ENCODE measurements at regions of chr11 and their contacts with region 1.

Region 1: DNA sequence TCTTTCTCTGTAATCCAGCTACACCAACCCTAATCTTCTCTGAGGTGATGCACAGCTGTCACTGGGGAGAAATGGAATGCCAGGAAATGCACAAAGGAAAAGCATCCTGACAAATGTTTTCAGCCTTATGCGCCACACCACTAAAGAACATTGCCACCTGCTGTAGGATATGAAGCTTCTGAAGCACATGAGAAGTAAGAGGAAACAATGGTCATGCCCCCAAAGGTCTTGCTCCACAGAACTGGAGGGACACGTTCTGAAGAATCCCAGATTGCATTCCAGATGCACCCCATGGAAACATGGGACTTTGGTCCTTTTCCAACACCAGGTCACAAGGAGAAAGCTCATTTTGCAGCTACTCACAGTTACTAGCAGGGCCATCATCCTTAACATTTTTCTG is 48.7 kb upstream of the ZBED5 start:
- ATAC-seq: peak in 4 of 8 experiments; percentile 11 to 47 (median 30)
- H3K4me3 ChIP-seq: no peak overlapping the region
- H3K27ac ChIP-seq: no peak overlapping the region
- H3K4me1 ChIP-seq: no peaks in the 10 kb centered on the region

Region 2: GRCh38 chr11:10792398-10792975 is 114.0 kb before region 1 on chr11:
- in situ Hi-C with region 1: loop called in 1 of 9 experiments (anchors 25 kb)
- ATAC-seq: peak; percentile 88 to 94 (median 92)
- H3K4me3 ChIP-seq: no peak overlapping the region
- H3K27ac ChIP-seq: no peak overlapping the region
- H3K4me1 ChIP-seq: no peaks in the 10 kb centered on the region

Measured in motor neuron (in vitro differentiated cells).